Heart left ventricle (tissue), 16 donors: ENCODE measurements at regions of chr3 and their contacts with region 1.

Region 1: DNA sequence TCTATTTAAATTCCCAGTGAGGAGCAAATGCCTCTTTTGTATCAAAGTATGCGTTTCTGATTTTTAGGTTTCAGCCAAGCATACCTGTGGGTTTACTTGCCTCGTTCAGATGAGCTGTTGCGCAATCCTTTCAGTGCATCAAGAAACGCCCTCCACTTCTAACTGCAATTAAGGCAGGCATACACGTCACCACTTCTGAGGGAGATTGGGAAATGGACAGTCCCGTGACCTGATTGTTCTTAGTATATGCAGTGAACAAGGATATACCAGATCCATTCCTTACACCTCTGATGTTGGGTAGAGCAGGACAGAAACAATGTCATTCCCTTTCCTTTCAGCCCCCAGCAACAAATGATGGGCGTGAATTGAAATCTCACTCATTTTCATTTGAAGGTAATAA is 219.0 kb downstream of the ITPR1 start:
- DNase-seq: no peak
- ATAC-seq: peak in 1 of 4 donors; percentile 30
- H3K4me3 ChIP-seq: no peak overlapping the region
- H3K27ac ChIP-seq: no peak overlapping the region
- H3K4me1 ChIP-seq: peaks cover 0 to 16% (median 2%) of the 10 kb centered on the region in 12 donors
- H3K27me3 ChIP-seq: no peaks in the 10 kb centered on the region
- CTCF ChIP-seq: no peak
- POLR2A ChIP-seq: no peak

Region 2: DNA sequence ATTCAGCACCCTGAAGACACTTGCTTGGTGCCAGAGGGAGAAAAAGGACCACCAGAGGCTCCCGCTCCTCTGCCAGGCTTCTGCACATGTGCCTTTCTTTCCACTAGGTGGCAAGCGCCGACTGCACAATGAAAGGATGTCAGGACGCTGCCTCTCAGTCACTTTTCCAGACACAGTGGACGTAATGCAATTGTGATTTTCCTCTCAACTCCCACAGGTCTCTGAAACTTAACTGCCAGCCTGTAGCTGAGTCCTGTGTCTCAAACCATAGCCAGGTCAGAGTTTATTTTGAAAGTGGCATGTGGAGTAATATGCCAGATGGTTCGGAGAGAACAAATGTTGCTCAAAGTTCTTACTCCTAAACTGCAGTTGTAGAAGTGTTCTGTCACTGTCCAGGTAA is 56.1 kb before region 1 on chr3:
- intact Hi-C with region 1: loop called in 6 of 10 experiments (anchors 2 to 5 kb)
- DNase-seq: peak; percentile 51 to 70 (median 64)
- ATAC-seq: peak; percentile 76 to 92 (median 90)
- H3K4me3 ChIP-seq: no peak overlapping the region
- H3K27ac ChIP-seq: peak overlapping the region in 6 of 12 donors; percentile 9 to 46 (median 39)
- H3K4me1 ChIP-seq: peaks cover 0 to 15% (median 9%) of the 10 kb centered on the region in 12 donors
- H3K27me3 ChIP-seq: no peaks in the 10 kb centered on the region
- CTCF ChIP-seq: peak; percentile 62 to 90 (median 82)
- POLR2A ChIP-seq: no peak

Region 3: DNA sequence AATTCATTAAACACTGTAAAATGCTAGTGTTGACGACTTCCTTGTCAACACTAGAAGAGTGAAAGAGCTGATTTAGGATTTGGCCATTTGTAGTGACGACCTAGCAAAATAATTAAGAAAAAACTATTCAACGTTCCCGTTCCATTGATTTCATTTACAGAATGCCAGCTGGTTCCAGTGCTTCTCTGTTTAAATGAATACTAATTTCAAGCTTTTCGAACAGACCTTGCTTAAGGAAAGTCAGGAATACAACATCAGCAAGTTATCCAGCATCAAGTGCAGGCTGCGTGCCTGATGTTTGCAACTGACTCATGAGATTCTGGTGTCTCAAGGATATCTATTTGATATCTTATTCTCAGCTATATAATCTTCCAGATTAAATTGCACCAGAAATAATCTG is 168.7 kb after region 1 on chr3:
- intact Hi-C with region 1: loop called in 1 of 10 experiments (anchors 10 kb)
- DNase-seq: no peak
- ATAC-seq: no peak
- H3K4me3 ChIP-seq: no peak overlapping the region
- H3K27ac ChIP-seq: no peak overlapping the region
- H3K4me1 ChIP-seq: no peaks in the 10 kb centered on the region
- H3K27me3 ChIP-seq: no peaks in the 10 kb centered on the region
- CTCF ChIP-seq: no peak
- POLR2A ChIP-seq: no peak

Region 4: DNA sequence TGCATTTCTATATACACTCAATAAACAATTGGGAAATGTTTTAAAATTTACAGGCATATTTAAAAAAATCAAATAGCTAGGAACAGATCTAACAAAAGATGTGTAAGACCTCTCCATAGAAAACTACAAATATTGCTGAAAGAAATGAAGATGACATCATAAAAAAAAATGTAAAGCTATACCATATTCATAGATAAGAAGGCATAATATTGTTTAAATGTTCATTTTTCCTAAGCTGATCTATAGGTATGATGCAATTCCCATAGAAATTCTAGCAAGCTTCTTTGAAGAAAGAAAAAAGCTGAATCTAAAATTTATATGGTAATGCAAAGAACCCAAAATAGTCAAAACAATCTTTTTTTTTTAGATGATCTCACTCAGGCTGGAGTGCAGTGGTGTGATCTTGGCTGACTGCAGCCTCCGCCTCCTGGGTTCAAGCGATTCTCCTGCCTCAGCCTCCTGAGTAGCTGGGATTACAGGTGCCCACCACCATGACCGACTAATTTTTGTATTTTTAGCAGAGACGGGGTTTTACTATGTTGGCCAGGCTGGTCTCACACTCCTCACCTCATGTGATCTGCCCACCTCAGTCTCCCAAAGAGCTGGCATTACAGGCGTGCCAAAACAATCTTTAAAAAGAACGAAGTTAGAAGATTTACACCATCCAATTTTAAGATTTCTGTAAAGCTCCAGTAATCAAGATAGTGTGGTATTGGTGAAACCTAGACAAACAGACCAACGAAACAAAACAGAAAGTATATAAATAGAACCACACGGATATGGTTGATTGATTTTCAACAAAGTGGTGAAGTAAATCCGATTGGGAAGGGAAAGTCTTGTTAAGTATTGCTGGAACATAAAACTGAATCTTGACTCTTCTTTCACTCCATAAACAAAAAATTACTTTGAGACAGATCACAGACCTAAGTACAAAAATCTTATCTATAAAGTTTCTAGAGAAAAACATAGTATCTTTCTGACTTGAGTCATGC is 260.8 kb after region 1 on chr3:
- intact Hi-C with region 1: loop called in 1 of 10 experiments (anchors 5 kb)
- DNase-seq: no peak
- ATAC-seq: no peak
- H3K4me3 ChIP-seq: no peak overlapping the region
- H3K27ac ChIP-seq: no peak overlapping the region
- H3K4me1 ChIP-seq: peaks cover 0 to 22% (median 14%) of the 10 kb centered on the region in 12 donors
- H3K27me3 ChIP-seq: no peaks in the 10 kb centered on the region
- CTCF ChIP-seq: no peak
- POLR2A ChIP-seq: no peak

Region 5: GRCh38 chr3:5026331-5027218 is 314.4 kb after region 1 on chr3:
- intact Hi-C with region 1: loop called in 5 of 10 experiments (anchors 1 to 5 kb)
- DNase-seq: peak; percentile 92 to 96 (median 93)
- ATAC-seq: peak; percentile 90 to 96 (median 92)
- H3K4me3 ChIP-seq: peak overlapping the region; percentile 13 to 65 (median 56)
- H3K27ac ChIP-seq: peak overlapping the region; percentile 58 to 95 (median 81)
- H3K4me1 ChIP-seq: peaks cover 0 to 23% (median 8%) of the 10 kb centered on the region in 12 donors
- H3K27me3 ChIP-seq: no peaks in the 10 kb centered on the region
- CTCF ChIP-seq: peak; percentile 54 to 87 (median 66)
- POLR2A ChIP-seq: no peak

Region 6: DNA sequence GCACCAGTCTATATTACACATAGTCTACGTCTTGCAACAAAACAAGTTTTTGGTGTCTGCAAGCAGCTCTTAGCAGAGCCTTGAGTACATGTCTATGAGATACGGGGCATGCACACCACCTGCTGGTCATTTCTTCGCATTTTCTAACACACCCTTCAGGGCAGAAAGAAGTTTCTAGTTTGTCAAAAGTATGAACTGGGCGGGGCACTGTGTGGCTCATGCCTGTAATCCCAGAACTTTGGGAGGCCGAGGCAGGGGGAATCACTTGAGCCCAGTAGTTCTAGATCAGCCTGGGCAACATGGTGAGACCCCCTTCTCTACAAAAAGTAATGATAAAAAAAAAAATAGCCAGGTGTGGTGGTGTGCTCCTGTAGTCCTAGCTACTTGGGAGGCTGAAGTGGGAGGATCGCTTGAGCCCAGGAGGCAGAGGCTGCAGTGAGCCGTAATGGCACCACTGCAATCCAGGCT is 345.7 kb after region 1 on chr3:
- intact Hi-C with region 1: loop called (anchors 1 to 2 kb)
- DNase-seq: peak in 4 of 5 donors; percentile 72 to 76 (median 73)
- ATAC-seq: peak; percentile 77 to 91 (median 89)
- H3K4me3 ChIP-seq: no peak overlapping the region
- H3K27ac ChIP-seq: peak overlapping the region in 2 of 12 donors; percentile 10 to 23
- H3K4me1 ChIP-seq: peaks cover 0 to 49% (median 8%) of the 10 kb centered on the region in 12 donors
- H3K27me3 ChIP-seq: no peaks in the 10 kb centered on the region
- CTCF ChIP-seq: peak; percentile 61 to 84 (median 77)
- POLR2A ChIP-seq: no peak

Region 7: DNA sequence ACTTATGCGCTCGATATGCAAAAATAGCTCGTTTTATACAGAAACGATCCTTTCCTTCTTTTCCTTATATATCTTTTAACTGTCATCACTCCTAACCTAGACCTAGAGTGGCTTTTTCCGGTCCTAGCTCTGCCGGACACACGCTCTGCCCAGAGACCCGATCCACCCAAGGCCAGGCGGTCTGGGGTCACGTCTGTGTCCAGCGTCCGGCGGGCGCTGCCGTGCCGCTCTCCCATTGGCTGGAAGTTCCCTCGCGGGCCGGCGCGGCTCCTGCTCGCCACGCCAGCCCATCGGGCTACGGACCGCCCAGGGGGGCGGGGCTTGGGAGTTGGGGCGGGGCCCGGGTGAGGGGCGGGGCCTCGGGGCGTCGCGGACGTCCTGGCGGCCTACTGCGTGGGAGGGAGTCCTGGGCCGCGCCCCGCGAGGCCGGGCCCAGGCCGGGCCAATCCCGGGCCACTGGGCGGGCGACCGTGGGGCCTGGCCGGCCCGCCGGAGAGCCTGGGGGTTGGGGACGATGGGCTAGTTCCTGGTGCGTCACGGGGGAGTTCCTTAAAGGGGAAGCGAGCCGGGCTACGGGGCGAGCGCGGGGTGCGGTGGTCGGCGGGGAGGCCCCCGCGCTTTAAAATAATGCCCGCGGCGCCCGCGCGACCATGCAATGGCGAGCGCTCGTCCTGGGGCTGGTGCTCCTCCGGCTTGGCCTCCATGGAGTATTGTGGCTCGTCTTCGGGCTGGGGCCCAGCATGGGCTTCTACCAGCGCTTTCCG is 475.2 kb after region 1 on chr3 and contains the start of gene EDEM1:
- intact Hi-C with region 1: loop called in 1 of 10 experiments (anchors 10 kb)
- DNase-seq: peak; percentile 96 to 99 (median 96)
- ATAC-seq: peak; percentile 94 to 98 (median 96)
- H3K4me3 ChIP-seq: peak within 1 kb of the TSS; percentile 67 to 99 (median 96)
- H3K27ac ChIP-seq: peak within 1 kb of the TSS; percentile 68 to 99 (median 96)
- H3K4me1 ChIP-seq: peaks cover 0 to 79% (median 30%) of the 10 kb centered on the region in 12 donors
- H3K27me3 ChIP-seq: no peaks in the 10 kb centered on the region
- CTCF ChIP-seq: no peak
- POLR2A ChIP-seq: peak; percentile 35 to 82
- total RNA-seq, gene EDEM1: 6.8 to 24.6 (median 10.9) TPM